ENCODE measurements at regions of chr6 and their contacts with region 1.

Region 1: GRCh38 chr6:16154904-16155303 is 26.0 kb downstream of the MYLIP start:
- DNase-seq: no peak
- H3K4me3 ChIP-seq: no peak overlapping the region
- H3K27ac ChIP-seq: no peak overlapping the region
- H3K4me1 ChIP-seq: peaks cover 0 to 14% of the 10 kb centered on the region in 2 experiments; a peak in 2 of 4 replicates
- H3K27me3 ChIP-seq: no peaks in the 10 kb centered on the region
- CTCF ChIP-seq: no peak
- EP300 ChIP-seq: no peak
- RAD21 ChIP-seq: no peak

Region 2: GRCh38 chr6:16168858-16169257 is 14.0 kb after region 1 on chr6:
- CTCF ChIA-PET with region 1: interaction called, 18 read pairs
- POLR2A ChIA-PET with region 1: no interaction called
- DNase-seq: no peak
- H3K4me3 ChIP-seq: no peak overlapping the region; a peak in 1 of 4 replicates
- H3K27ac ChIP-seq: no peak overlapping the region
- H3K4me1 ChIP-seq: no peaks in the 10 kb centered on the region; a peak in 1 of 4 replicates
- H3K27me3 ChIP-seq: no peaks in the 10 kb centered on the region
- CTCF ChIP-seq: peak; percentile 57
- EP300 ChIP-seq: no peak
- RAD21 ChIP-seq: peak; percentile 86

Region 3: DNA sequence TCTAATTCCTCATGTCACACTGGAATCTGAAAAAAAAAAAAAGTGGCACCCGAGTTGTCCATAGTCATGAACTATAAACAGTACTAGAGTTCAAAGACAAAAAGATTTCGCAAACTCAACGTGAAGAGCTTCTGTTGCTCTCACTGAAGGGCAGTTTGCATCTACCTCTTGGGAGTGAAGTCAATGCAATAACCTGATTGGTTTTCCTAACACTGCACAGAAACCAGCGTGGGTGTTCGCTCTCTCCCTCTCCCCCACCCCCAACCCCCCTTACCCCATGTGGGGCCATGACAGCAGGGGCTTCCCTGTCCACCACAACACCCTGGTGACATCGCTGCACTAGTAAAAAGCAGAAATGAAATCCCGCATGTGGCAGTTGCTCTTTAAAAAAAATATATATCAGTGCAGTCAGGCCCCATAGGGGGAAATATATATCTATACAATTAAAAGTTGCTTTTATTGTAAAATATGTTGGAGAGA is 150.4 kb after region 1 on chr6:
- CTCF ChIA-PET with region 1: no interaction called
- POLR2A ChIA-PET with region 1: no interaction called
- DNase-seq: no peak
- H3K4me3 ChIP-seq: no peak overlapping the region
- H3K27ac ChIP-seq: no peak overlapping the region
- H3K4me1 ChIP-seq: no peaks in the 10 kb centered on the region
- H3K27me3 ChIP-seq: no peaks in the 10 kb centered on the region
- CTCF ChIP-seq: no peak
- EP300 ChIP-seq: no peak
- RAD21 ChIP-seq: no peak